ENCODE measurements at regions of chr5 and their contacts with region 1.

Region 1: DNA sequence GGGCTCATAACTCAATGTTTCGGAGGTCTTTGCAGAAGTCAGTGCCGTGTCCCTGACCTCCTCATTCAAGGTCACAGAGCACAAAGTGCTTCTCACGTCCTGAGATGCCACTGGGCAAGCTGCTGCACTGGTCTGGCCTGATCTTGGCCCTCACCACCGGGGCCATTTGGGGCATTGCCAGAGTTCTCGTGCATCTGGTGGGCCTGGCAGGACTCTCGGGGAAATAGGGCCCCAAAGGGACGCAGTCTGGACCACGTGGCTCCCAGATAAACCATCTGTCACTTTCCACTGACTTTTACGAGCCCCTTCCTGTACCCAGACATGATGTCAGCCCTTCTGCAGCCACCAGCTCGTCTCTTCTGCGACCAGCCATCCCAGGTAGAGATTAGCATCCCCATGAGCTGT is 54.8 kb downstream of the HRH2 start:
- DNase-seq: no peak
- H3K4me3 Mint-ChIP-seq: no peak overlapping the region
- H3K27ac Mint-ChIP-seq: no peak overlapping the region
- H3K4me1 Mint-ChIP-seq: peaks cover 4% of the 10 kb centered on the region
- H3K27me3 Mint-ChIP-seq: peaks cover 2% of the 10 kb centered on the region

Region 2: DNA sequence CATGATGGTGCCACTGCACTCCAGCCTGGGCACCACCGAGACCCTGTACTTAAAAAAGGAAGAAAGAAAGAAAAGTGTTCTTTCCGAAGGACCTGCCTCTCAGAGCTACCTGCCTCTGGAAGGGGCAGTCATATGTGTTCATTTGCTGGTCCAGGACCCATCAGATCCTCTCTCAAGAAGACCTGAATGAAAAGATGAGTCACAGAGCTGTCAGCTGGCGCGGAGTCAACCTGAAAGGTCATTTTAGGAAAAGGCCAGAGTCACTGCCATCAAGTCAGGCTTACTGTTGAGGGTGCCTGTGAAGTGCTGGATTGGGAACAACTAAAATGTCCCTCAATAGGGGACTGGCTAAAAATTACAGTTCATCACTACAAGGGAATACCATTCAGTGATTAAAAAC is 69.7 kb before region 1 on chr5:
- CTCF ChIA-PET with region 1: no interaction called
- POLR2A ChIA-PET with region 1: no interaction called
- DNase-seq: no peak
- H3K4me3 Mint-ChIP-seq: no peak overlapping the region
- H3K27ac Mint-ChIP-seq: no peak overlapping the region
- H3K4me1 Mint-ChIP-seq: peaks cover 6% of the 10 kb centered on the region
- H3K27me3 Mint-ChIP-seq: peaks cover 22% of the 10 kb centered on the region

Region 3: DNA sequence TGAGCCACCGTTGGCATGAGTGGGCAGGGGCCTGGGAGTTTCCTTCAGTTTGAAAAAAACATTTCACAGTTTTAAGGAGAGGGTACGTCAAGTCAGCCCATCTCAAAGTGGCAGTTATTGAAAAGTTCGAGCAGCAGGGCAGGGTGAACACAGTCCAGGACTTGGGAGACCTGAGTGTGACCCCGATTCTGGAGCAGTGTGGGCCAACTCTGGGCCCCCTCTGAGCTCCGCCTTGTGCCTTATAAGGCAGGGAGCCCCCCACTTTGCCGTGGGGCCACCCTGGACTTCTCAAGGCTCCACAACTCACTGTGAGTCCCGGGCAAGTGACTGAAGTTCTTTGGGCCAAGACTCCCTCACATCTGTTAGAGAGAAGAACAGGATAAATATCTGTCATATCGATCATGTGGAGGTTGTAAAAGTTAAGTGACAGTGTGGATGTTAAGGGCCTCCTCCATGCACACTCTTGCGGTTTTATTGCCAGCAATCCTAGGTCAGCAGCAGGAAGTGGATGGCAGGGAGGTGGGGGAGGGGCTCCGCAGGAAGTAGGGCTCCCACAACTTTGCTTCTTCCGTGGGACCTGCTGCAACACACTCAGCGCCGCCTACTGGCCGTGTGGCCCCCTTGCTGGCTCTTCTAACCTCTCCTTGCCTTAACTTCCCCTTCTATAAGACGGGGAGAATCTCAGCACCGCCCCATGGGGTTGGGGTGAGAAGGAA is 16.4 kb before region 1 on chr5:
- CTCF ChIA-PET with region 1: interaction called, 12 read pairs
- POLR2A ChIA-PET with region 1: no interaction called
- DNase-seq: peak; percentile 81
- H3K4me3 Mint-ChIP-seq: no peak overlapping the region
- H3K27ac Mint-ChIP-seq: peak overlapping the region; percentile 2
- H3K4me1 Mint-ChIP-seq: peaks cover 21% of the 10 kb centered on the region
- H3K27me3 Mint-ChIP-seq: no peaks in the 10 kb centered on the region